PC-9 (cell line): ENCODE measurements at regions of chr1 and their contacts with region 1.

Region 1: DNA sequence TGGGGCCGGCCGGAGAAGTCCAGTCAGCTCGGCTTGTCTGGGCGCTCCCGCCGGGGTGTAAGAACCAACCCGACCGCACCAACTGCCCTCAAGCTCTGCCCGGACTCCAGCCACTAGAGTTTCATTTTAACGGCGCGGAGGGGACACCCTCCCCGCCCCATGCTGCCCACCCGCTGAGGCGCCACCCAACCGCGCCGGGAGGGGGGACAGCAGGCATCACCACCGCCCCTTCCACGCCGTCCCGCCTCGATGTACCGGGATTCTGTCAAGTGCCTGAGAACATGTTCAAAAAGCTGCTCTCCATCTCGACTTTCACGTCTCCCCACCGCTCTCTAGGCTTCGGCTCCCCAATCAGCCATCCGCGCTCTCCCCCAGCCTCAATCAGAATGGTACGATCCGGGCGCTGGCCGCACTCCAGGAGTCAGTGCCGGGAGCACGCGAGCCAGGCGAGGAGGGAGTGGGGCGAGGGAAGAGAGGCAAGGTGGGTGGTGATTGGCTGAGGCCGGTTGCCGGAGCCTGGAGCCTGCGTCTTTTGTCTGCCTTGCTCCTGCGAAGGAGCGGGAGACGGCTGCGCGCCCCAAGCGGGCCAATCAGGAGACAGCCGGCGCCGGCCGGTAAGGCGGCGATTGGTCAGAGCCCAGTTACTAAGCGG is at the start of gene PIK3R3:
- DNase-seq: peak; percentile 95 to 99
- H3K4me3 ChIP-seq: peak within 1 kb of the TSS; percentile 95
- H3K27ac ChIP-seq: peak within 1 kb of the TSS; percentile 98
- H3K4me1 ChIP-seq: peaks cover 60% of the 10 kb centered on the region
- H3K27me3 ChIP-seq: no peaks in the 10 kb centered on the region
- CTCF ChIP-seq: no peak
- total RNA-seq, gene PIK3R3: 19.6 and 44.2 TPM in 2 replicates

Region 2: GRCh38 chr1:46036894-46037839 is 95.5 kb before region 1 on chr1:
- CTCF ChIA-PET with region 1: no interaction called
- POLR2A ChIA-PET with region 1: no interaction called
- intact Hi-C with region 1: loop called (anchors 1 kb)
- DNase-seq: peak; percentile 66 to 87
- H3K4me3 ChIP-seq: no peak overlapping the region
- H3K27ac ChIP-seq: no peak overlapping the region; the same call in 1 of the 2 replicates
- H3K4me1 ChIP-seq: peaks cover 24% of the 10 kb centered on the region
- H3K27me3 ChIP-seq: no peaks in the 10 kb centered on the region
- CTCF ChIP-seq: peak; percentile 97

Region 3: GRCh38 chr1:46084553-46085451 is 47.9 kb before region 1 on chr1:
- CTCF ChIA-PET with region 1: interaction called, 3 read pairs
- POLR2A ChIA-PET with region 1: interaction called, 6 read pairs
- intact Hi-C with region 1: loop called (anchors 5 kb)
- DNase-seq: peak in 1 of 2 experiments; percentile 70
- H3K4me3 ChIP-seq: peak overlapping the region; percentile 10; the same call in 1 of the 2 replicates
- H3K27ac ChIP-seq: peak overlapping the region; percentile 91
- H3K4me1 ChIP-seq: peaks cover 50% of the 10 kb centered on the region
- H3K27me3 ChIP-seq: no peaks in the 10 kb centered on the region
- CTCF ChIP-seq: no peak

Region 4: GRCh38 chr1:46173361-46173856 is 40.8 kb after region 1 on chr1:
- CTCF ChIA-PET with region 1: interaction called, 4 read pairs
- POLR2A ChIA-PET with region 1: interaction called, 5 read pairs
- intact Hi-C with region 1: loop called (anchors 1 kb)
- DNase-seq: no peak
- H3K4me3 ChIP-seq: no peak overlapping the region
- H3K27ac ChIP-seq: peak overlapping the region; percentile 99
- H3K4me1 ChIP-seq: peaks cover 86% of the 10 kb centered on the region
- H3K27me3 ChIP-seq: no peaks in the 10 kb centered on the region
- CTCF ChIP-seq: no peak